Calu3 (cell line): ENCODE measurements at regions of chr2 and their contacts with region 1.

Region 1: GRCh38 chr2:231514103-231514950 is 15.9 kb downstream of the NMUR1 start:
- DNase-seq: peak; percentile 99
- H3K4me3 Mint-ChIP-seq: peak overlapping the region; percentile 79
- H3K27ac Mint-ChIP-seq: peak overlapping the region; percentile 77
- H3K4me1 Mint-ChIP-seq: peaks cover 15% of the 10 kb centered on the region
- H3K27me3 Mint-ChIP-seq: peaks cover 7% of the 10 kb centered on the region
- CTCF ChIP-seq: no peak

Region 2: GRCh38 chr2:231557571-231558237 is 43.4 kb after region 1 on chr2:
- CTCF ChIA-PET with region 1: interaction called, 8 read pairs
- intact Hi-C with region 1: loop called (anchors 1 kb)
- DNase-seq: peak; percentile 55
- H3K4me3 Mint-ChIP-seq: no peak overlapping the region
- H3K27ac Mint-ChIP-seq: no peak overlapping the region
- H3K4me1 Mint-ChIP-seq: no peaks in the 10 kb centered on the region
- H3K27me3 Mint-ChIP-seq: peaks cover 21% of the 10 kb centered on the region
- CTCF ChIP-seq: peak; percentile 50

Region 3: GRCh38 chr2:232260075-232260474 is 745.7 kb after region 1 on chr2:
- CTCF ChIA-PET with region 1: no interaction called
- intact Hi-C with region 1: no loop called
- DNase-seq: peak; percentile 61
- H3K4me3 Mint-ChIP-seq: no peak overlapping the region
- H3K27ac Mint-ChIP-seq: no peak overlapping the region
- H3K4me1 Mint-ChIP-seq: peaks cover 30% of the 10 kb centered on the region
- H3K27me3 Mint-ChIP-seq: no peaks in the 10 kb centered on the region
- CTCF ChIP-seq: no peak